ENCODE measurements at regions of chr4 and their contacts with region 1.

Region 1: DNA sequence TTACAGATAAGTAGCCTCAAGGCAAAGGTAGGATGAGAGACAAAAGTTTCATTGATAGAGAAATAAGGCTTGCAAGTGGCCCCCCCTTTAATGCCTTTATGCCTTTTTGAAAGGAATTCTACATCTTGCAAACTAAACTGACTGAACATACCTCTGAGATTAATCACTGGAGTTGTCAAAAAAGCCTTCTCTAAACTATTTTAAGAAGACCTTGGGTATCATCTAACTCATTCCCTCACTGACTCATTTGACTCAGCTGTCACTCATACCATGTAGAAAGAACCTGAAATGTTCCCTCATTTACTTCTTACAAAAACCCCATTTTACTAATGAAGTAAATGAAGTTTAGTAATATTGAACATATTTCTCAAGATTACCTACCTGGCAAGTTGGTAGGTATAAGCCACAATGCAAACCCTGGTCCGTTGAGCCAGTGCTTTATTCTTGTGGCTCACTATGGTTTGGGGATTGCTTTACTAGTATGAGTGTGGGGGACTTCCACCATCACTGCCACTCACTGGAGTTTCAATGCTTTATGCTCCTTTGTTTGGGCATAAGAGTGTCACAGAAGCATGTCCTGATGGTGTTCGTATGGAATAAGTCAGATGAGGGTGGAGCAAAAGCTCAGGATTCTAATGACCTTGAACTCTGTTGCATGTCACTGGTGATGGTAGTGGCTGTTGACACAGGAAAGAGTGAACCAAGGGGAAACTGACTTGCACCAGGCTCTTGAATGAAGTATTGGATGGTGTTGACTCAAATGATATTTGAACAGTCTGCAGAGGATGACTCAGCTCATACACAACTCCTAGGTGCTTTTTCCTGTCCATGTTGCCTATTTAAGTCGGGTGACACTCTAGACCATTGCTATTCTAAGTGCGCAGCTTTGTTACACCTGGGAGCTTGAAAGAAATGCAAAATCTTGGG is 305.5 kb upstream of the EMCN start:
- DNase-seq: no peak
- H3K4me3 ChIP-seq: no peak overlapping the region
- H3K27ac ChIP-seq: no peak overlapping the region
- H3K27me3 ChIP-seq: no peaks in the 10 kb centered on the region
- CTCF ChIP-seq: no peak

Region 2: GRCh38 chr4:100421361-100421978 is 401.9 kb before region 1 on chr4:
- intact Hi-C with region 1: loop called in 1 of 2 experiments (anchors 10 kb)
- DNase-seq: no peak
- H3K4me3 ChIP-seq: peak overlapping the region in 42 of 59 donors; percentile 0 to 51 (median 34)
- H3K27ac ChIP-seq: peak overlapping the region in 17 of 59 donors; percentile 9 to 68 (median 31)
- H3K27me3 ChIP-seq: no peaks in the 10 kb centered on the region
- CTCF ChIP-seq: peak; percentile 23 to 75 (median 58)

Region 3: GRCh38 chr4:100954046-100954445 is 130.7 kb after region 1 on chr4:
- intact Hi-C with region 1: loop called in 1 of 2 experiments (anchors 10 kb)
- DNase-seq: no peak
- H3K4me3 ChIP-seq: no peak overlapping the region
- H3K27ac ChIP-seq: peak overlapping the region in 47 of 59 donors; percentile 2 to 86 (median 65)
- H3K27me3 ChIP-seq: no peaks in the 10 kb centered on the region
- CTCF ChIP-seq: no peak

Region 4: GRCh38 chr4:100989401-100989800 is 166.1 kb after region 1 on chr4:
- intact Hi-C with region 1: no loop called
- DNase-seq: no peak
- H3K4me3 ChIP-seq: no peak overlapping the region
- H3K27ac ChIP-seq: no peak overlapping the region
- H3K27me3 ChIP-seq: no peaks in the 10 kb centered on the region
- CTCF ChIP-seq: no peak